Activated CD4-positive, alpha-beta T cell treated with anti-CD3 and anti-CD28 coated beads for 36 hours (primary cell): ENCODE measurements at regions of chr4 and their contacts with region 1.

Region 1: DNA sequence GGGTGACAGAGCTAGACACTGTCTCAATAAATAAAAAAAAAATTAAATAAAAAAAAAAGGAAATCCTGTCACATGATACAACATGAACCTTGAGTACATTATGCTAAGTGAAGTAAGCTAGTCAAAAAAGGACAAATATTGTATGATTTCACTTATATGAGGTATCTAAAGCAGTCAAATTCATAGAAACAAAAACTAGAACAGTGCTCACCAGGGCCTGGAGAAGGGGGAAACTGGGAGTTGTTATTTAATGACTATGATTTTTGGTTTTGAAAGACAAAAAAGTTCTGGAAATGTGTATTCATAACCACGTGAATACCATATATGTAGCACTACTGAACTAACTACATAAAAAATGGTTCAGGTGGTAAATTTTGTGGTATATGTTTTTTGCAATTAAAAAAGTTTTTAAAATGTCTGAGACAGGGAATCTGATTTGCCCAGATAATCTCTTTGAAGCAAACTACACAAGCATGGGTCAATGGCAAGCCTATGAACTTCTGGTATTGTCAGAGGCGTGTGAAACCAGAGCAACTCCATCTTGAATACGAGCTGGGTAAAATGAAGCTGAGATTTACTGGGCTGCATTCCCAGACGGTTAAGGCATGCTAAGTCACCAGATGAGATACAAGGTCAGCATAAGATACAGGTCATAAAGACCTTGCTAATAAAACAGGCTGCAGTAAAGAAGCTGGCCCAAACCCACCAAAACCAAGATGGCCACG is 42.3 kb downstream of the ANAPC10 start:
- DNase-seq: no peak
- ATAC-seq: peak; percentile 80
- H3K4me3 Mint-ChIP-seq: no peak overlapping the region
- H3K27ac Mint-ChIP-seq: no peak overlapping the region
- H3K4me1 Mint-ChIP-seq: peaks cover 23% of the 10 kb centered on the region
- H3K27me3 Mint-ChIP-seq: no peaks in the 10 kb centered on the region

Region 2: DNA sequence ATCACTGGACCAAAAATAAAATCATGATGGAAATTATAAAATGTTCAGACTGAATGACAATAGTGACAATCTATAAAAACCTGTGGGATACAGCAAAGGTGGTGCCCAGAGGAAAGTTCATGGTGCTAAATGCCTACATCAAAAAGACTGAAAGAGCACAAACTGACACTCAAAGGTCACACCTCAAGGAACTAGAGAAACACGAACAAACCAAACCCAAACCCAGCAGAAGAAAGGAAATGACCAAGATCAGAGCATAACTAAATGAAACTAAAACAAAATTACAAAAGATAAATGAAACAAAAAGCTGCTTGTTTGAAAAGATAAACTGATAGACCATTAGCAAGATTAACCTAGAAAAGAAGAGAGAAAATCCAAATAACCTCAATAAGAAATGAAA is 36.3 kb before region 1 on chr4:
- CTCF ChIA-PET with region 1: no interaction called
- POLR2A ChIA-PET with region 1: no interaction called
- intact Hi-C with region 1: loop called in 1 of 2 experiments (anchors 2 kb)
- DNase-seq: no peak
- ATAC-seq: peak; percentile 47
- H3K4me3 Mint-ChIP-seq: peak overlapping the region; percentile 19
- H3K27ac Mint-ChIP-seq: peak overlapping the region; percentile 91
- H3K4me1 Mint-ChIP-seq: peaks cover 32% of the 10 kb centered on the region
- H3K27me3 Mint-ChIP-seq: no peaks in the 10 kb centered on the region

Region 3: DNA sequence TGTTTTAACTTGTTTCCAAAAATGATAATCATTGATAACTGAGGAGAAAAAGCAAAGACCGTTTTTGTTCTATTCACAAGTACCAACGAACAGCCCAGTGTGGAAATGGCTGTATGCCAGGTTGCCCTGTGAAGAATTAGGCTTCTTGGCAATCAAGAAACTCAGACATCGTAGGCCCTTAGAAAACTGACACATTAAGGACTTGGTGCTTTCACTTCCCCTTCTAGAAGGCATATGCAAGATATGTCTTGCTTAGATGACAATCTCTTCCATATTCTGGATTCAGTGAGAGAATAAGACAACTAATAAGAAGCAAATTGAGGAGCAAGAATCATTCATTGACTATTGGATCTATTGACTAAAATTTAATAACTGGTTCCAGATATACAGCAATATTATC is 14.3 kb before region 1 on chr4:
- CTCF ChIA-PET with region 1: no interaction called
- POLR2A ChIA-PET with region 1: no interaction called
- intact Hi-C with region 1: no loop called
- DNase-seq: no peak
- ATAC-seq: no peak
- H3K4me3 Mint-ChIP-seq: no peak overlapping the region
- H3K27ac Mint-ChIP-seq: no peak overlapping the region
- H3K4me1 Mint-ChIP-seq: peaks cover 3% of the 10 kb centered on the region
- H3K27me3 Mint-ChIP-seq: no peaks in the 10 kb centered on the region